ENCODE measurements at regions of chr7 and their contacts with region 1.

Region 1: DNA sequence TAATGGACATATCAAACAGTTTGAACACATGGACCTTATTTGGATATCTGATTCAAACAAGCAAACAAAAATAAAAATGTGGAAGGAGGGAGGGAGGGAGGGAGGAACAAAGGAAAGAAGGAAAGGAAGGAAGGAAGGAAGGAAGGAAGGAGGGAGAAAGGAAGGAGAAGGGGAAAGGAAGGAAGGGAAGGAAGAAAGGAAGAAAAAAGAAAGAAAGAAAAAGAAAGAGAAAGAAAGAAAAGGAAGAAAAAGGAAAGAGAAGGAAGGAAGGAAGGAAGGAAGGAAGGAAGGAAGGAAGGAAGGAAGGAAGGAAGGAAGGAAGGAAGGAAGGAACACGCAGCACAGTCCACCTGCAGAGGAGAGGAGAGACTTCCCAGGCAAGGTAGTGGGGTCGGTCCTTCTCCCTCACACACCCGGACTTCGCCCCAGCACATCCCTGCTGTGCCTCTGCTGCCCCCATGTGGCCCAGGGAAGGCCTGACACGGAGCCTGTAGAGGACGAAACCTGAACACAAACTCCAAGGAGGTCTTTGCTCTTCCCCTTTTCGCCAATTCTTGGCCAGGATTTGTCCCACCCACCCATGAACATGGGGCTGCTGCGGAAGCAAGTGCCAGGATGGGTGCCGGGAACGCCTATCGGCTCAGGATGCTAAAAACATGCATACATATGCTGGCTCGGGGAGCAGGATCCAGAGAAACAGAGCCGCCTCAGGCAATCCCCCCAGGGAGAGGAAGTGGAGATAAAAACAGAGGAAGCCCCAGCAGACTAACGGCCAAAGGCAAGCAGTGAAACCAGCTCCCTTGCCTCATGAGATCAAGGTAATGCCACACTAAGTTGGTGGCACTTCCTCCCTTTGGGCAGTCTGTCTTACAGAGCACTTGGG is 52.3 kb upstream of the DGKI start:
- DNase-seq: peak; percentile 86

Region 2: DNA sequence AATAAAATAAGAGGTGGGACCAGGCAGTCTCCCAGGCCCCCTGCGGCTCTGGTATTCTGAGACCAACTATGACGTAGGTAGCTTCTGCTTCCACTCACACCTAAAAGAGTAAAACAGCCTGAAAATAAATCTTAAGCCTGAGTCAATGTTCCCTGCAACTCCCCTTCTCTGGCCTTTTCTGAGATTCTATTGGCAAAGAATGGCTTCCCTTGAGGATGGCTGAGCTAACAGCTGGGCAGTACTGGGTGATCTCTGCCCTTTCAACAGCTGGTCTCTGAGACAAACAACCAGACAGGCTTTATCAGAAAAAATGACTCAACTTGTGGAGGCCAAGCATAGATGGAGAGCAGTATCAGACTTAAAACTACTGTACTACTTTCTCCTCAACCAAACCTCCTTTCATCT is 44.1 kb after region 1 on chr7:
- CTCF ChIA-PET with region 1: no interaction called
- POLR2A ChIA-PET with region 1: no interaction called
- DNase-seq: no peak

Region 3: GRCh38 chr7:138002096-138002827 is 103.2 kb after region 1 on chr7:
- CTCF ChIA-PET with region 1: interaction called, 45 read pairs
- POLR2A ChIA-PET with region 1: no interaction called
- DNase-seq: peak; percentile 99

Region 4: DNA sequence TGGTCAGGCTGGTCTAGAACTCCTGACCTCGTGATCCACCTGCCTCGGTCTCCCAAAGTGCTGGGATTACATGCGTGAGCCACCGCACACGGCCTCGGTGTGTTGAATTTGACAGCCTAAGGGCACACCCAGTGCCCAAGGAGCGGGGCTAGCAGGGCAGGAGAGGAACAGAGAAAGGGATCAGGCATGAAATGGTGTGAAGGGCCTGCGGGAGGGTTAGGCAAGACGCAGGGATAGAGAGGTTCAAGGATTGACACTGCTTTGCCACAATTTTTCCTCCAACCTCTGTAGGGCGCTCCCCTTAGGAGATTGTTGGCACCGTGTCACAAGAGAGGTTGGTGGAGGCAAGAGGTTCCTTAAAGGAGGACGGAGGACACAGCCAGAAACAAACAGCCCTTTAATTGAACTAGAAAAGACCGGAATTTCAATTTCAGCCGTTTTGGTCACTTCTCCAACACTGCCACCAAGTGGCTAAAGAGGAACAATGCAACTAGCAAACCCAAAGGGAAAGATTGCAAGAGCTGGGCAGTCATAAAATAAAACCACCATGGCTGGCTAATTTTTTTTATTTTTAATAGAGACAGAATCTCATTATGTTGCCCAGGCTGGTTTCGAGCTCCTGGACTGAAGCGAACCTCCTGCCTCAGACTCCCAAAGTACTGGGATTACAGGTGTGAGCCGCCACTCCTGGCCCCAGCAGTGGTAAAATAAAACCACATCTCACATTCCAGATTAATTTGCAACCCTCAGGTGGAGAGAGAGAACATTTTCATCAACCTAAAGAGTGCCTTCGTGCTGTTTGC is 109.7 kb after region 1 on chr7:
- CTCF ChIA-PET with region 1: interaction called, 45 read pairs
- POLR2A ChIA-PET with region 1: no interaction called
- DNase-seq: peak; percentile 71

Measured in HEK293T (cell line).